AG04450 (cell line): ENCODE measurements at regions of chr15 and their contacts with region 1.

Region 1: GRCh38 chr15:88638626-88639372 is at the start of gene ISG20:
- DNase-seq: peak; percentile 96
- H3K4me3 ChIP-seq: peak within 1 kb of the TSS; percentile 58
- H3K27ac ChIP-seq: peak within 1 kb of the TSS; percentile 99
- H3K27me3 ChIP-seq: no peaks in the 10 kb centered on the region
- CTCF ChIP-seq: peak; percentile 50
- polyA plus RNA-seq, gene ISG20: 5.2 and 5.5 TPM in 2 replicates

Region 2: DNA sequence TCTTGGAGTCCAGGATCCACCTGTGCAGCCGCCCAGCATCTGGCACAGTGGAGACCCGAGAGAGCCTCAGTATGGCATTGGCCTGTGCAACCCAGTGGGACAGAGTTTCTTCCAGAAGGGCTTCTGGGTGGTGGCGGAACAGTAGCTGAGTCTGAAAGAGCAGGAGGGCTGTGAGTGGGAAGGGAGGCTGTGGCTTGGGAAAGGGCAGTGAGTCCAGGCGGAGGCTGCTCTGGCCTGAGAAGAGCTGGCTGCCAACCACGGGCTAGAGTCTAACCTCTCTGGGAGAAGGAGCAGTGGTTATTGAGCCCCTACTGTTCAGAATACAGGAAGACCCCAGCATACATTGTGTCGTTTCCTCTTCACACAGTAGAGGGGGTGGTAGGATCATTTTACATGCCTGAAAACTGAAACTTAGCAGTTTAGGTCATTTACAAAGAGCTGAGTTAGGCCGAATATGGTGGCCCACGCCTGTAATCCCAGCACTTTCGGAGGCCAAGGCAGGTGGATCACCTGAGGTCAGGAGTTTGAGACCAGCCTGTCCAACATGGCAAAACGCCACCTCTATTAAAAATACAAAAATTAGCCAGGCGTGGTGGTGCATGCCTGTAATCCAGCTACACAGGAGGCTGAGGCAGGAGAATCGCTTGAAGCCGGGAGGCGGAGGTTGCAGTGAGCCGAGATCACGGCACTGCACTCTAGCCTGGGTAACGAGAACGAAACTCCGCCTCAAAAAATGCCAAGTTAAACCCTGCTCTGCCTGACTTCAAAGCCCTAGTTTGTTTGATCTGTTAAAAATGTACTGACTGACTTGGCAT is 14.4 kb before region 1 on chr15:
- CTCF ChIA-PET with region 1: interaction called, 6 read pairs
- POLR2A ChIA-PET with region 1: interaction called, 18 read pairs
- DNase-seq: no peak
- H3K4me3 ChIP-seq: peak overlapping the region; percentile 94
- H3K27ac ChIP-seq: peak overlapping the region; percentile 65
- H3K27me3 ChIP-seq: no peaks in the 10 kb centered on the region
- CTCF ChIP-seq: peak; percentile 57

Region 3: GRCh38 chr15:88769161-88769971 is 130.6 kb after region 1 on chr15:
- CTCF ChIA-PET with region 1: no interaction called
- POLR2A ChIA-PET with region 1: no interaction called
- DNase-seq: no peak
- H3K4me3 ChIP-seq: peak overlapping the region; percentile 29
- H3K27ac ChIP-seq: no peak overlapping the region
- H3K27me3 ChIP-seq: peaks cover 15% of the 10 kb centered on the region
- CTCF ChIP-seq: no peak